ENCODE measurements at regions of chr13 and their contacts with region 1.

Region 1: DNA sequence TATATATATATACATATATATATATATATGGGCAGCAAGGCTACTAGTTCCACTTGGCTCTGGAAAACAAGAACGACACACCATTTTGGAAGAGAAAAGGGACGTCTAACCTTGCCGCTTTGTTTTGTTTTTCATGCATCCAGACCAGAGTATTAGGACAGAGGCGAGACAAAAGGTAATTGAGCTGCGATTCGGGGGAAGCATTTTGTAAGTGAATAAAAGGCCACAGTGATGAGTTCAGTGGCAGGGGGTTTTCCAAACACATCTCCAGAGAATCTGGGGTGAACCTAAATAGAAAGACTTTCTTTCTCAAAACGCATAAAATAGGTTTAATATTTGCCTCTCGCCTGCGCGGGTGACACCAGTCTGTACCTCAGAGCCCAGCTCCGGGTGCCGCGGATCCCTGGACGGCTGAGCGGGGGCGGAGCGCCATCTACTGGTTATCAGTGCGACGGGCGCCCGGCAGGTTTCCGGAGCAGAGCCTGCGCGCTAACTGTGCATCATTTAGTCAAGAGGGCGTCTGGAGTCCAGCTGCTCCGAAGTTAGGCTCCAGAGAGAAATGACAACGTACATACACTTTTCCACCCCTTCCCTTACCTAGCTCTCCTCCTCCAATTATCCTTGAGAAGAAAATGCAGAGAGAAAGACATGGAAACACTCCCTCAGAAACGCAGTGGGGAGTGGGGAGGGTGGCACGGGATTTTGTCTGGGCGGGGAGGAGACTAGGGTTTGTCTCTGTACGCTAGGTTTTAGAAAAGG is 262.3 kb downstream of the TBC1D4 start:
- DNase-seq: peak; percentile 11
- H3K4me3 ChIP-seq: peak overlapping the region in 2 of 4 donors; percentile 16 to 39
- H3K27ac ChIP-seq: no peak overlapping the region
- H3K4me1 ChIP-seq: peaks cover 0 to 8% (median 0%) of the 10 kb centered on the region in 3 donors
- H3K27me3 ChIP-seq: peaks cover 0 to 9% (median 0%) of the 10 kb centered on the region in 4 donors
- CTCF ChIP-seq: peak; percentile 75 to 95 (median 91)
- POLR2A ChIP-seq: no peak

Region 2: GRCh38 chr13:73849292-73849691 is 1370.4 kb before region 1 on chr13:
- intact Hi-C with region 1: loop called (anchors 10 kb)
- DNase-seq: no peak
- H3K4me3 ChIP-seq: no peak overlapping the region
- H3K27ac ChIP-seq: no peak overlapping the region
- H3K4me1 ChIP-seq: no peaks in the 10 kb centered on the region
- H3K27me3 ChIP-seq: no peaks in the 10 kb centered on the region
- CTCF ChIP-seq: peak in 2 of 6 experiments; percentile 19 to 25
- POLR2A ChIP-seq: no peak

Region 3: GRCh38 chr13:74825152-74825937 is 394.3 kb before region 1 on chr13:
- intact Hi-C with region 1: no loop called
- DNase-seq: no peak
- H3K4me3 ChIP-seq: no peak overlapping the region
- H3K27ac ChIP-seq: no peak overlapping the region
- H3K4me1 ChIP-seq: no peaks in the 10 kb centered on the region
- H3K27me3 ChIP-seq: no peaks in the 10 kb centered on the region
- CTCF ChIP-seq: no peak
- POLR2A ChIP-seq: no peak